Endothelial cell of umbilical vein (primary cell): ENCODE measurements at regions of chr11 and their contacts with region 1.

Region 1: GRCh38 chr11:60821827-60822599 is 19.9 kb upstream of the CCDC86 start:
- DNase-seq: no peak
- H3K4me3 ChIP-seq: no peak overlapping the region
- H3K27ac ChIP-seq: no peak overlapping the region
- H3K4me1 ChIP-seq: no peaks in the 10 kb centered on the region
- H3K27me3 ChIP-seq: no peaks in the 10 kb centered on the region
- CTCF ChIP-seq: no peak
- POLR2A ChIP-seq: no peak

Region 2: GRCh38 chr11:60029015-60029632 is 792.9 kb before region 1 on chr11:
- CTCF ChIA-PET with region 1: no interaction called
- POLR2A ChIA-PET with region 1: no interaction called
- dilution Hi-C with region 1: no loop called
- intact Hi-C with region 1: loop called (anchors 10 kb)
- DNase-seq: no peak
- H3K4me3 ChIP-seq: no peak overlapping the region
- H3K27ac ChIP-seq: no peak overlapping the region
- H3K4me1 ChIP-seq: no peaks in the 10 kb centered on the region
- H3K27me3 ChIP-seq: peaks cover 0 to 2% of the 10 kb centered on the region in 2 experiments
- CTCF ChIP-seq: no peak
- POLR2A ChIP-seq: no peak